H1 (cell line): ENCODE measurements at regions of chr15 and their contacts with region 1.

Region 1: DNA sequence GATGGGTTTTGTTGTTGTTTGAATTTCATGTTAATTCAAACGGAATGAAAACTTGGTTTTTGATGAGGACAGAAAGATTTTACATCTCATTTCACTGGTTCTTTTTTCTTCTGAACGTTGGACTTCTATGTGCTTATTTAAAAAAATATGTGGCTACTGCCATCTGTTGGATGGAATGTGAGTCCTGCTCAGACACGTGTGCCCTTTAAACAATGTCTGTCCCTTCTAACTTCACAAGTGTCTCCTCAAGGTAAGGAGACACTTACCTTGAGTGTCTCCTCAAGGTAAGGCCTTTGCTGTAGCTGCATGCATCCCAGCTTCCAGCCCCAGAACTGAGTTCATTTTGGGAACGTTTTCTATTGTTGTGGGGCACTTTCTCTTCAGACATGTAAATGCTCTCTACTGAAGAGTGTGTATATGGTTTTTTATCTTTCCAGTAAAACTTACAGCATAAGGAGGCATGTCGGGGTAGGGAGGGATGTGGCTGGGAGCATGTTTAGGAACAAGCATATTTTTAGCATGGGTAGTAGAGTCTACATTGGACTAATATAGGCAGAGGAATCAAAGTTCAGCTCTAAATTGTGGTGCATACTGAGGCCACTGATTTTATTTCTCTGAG is 63.1 kb upstream of the UBE3A start:
- DNase-seq: no peak
- H3K4me3 ChIP-seq: no peak overlapping the region
- H3K27ac ChIP-seq: no peak overlapping the region
- H3K4me1 ChIP-seq: peaks cover 0 to 11% (median 7%) of the 10 kb centered on the region in 4 experiments; a peak in 5 of 7 replicates
- H3K27me3 ChIP-seq: no peaks in the 10 kb centered on the region
- CTCF ChIP-seq: peak in 2 of 3 experiments; percentile 25 to 69; a peak in 2 of 4 replicates
- EP300 ChIP-seq: no peak
- POLR2A ChIP-seq: no peak
- RAD21 ChIP-seq: peak; percentile 60 to 63

Region 2: GRCh38 chr15:25481207-25481859 is 20.6 kb before region 1 on chr15:
- CTCF ChIA-PET with region 1: interaction called, 19 read pairs
- POLR2A ChIA-PET with region 1: no interaction called
- DNase-seq: peak; percentile 63 to 65
- H3K4me3 ChIP-seq: peak overlapping the region in 3 of 4 experiments; percentile 11 to 21 (median 14); a peak in 3 of 8 replicates
- H3K27ac ChIP-seq: peak overlapping the region; percentile 76
- H3K4me1 ChIP-seq: peaks cover 0 to 9% (median 5%) of the 10 kb centered on the region in 4 experiments; a peak in 4 of 7 replicates
- H3K27me3 ChIP-seq: no peaks in the 10 kb centered on the region
- CTCF ChIP-seq: no peak
- EP300 ChIP-seq: no peak
- POLR2A ChIP-seq: peak in 1 of 2 experiments; percentile 60; a peak in 1 of 3 replicates
- RAD21 ChIP-seq: no peak

Region 3: DNA sequence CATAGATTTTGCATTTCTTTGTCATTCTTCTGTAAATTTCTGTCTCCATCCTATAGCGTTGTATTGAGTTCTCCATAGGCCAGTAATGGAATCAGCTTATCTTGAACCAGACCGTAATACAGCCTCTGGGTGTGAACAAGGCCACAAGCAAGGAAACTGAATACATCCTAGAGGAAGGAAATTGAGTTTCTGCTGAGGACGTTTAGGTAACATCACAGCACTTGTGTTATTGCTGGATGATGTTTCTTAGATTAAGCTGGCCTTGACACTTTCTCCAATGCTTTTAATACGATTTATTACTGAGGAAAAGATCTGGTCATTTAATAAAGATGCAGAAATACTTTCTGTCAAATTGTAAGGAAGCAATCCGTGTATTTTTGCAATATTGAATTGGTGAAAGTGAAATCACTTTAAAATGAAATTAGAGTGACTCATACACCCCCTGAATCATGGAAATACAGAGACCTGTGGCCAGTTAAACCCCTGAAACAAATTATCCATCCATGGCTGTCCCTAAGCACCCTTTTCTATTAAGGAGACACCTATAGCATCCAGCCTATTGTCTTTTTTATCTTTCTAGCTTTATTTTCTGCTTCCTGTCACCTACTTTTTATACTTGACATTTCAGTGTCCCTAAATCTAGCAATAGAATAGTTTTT is 14.6 kb before region 1 on chr15:
- CTCF ChIA-PET with region 1: interaction called, 19 read pairs
- POLR2A ChIA-PET with region 1: interaction called, 3 read pairs
- DNase-seq: no peak
- H3K4me3 ChIP-seq: no peak overlapping the region
- H3K27ac ChIP-seq: no peak overlapping the region
- H3K4me1 ChIP-seq: no peaks in the 10 kb centered on the region; a peak in 2 of 7 replicates
- H3K27me3 ChIP-seq: no peaks in the 10 kb centered on the region
- CTCF ChIP-seq: no peak
- EP300 ChIP-seq: no peak
- POLR2A ChIP-seq: no peak
- RAD21 ChIP-seq: no peak

Region 4: GRCh38 chr15:25684521-25685431 is 182.8 kb after region 1 on chr15:
- CTCF ChIA-PET with region 1: interaction called, 119 read pairs
- POLR2A ChIA-PET with region 1: no interaction called
- DNase-seq: no peak
- H3K4me3 ChIP-seq: no peak overlapping the region
- H3K27ac ChIP-seq: no peak overlapping the region
- H3K4me1 ChIP-seq: peaks cover 0 to 7% (median 0%) of the 10 kb centered on the region in 4 experiments; a peak in 3 of 7 replicates
- H3K27me3 ChIP-seq: no peaks in the 10 kb centered on the region
- CTCF ChIP-seq: peak in 1 of 3 experiments; percentile 6; a peak in 1 of 4 replicates
- EP300 ChIP-seq: no peak
- POLR2A ChIP-seq: no peak
- RAD21 ChIP-seq: no peak

Region 5: GRCh38 chr15:25693321-25694237 is 191.6 kb after region 1 on chr15:
- CTCF ChIA-PET with region 1: interaction called, 119 read pairs
- POLR2A ChIA-PET with region 1: no interaction called
- DNase-seq: peak in 1 of 2 experiments; percentile 86
- H3K4me3 ChIP-seq: no peak overlapping the region
- H3K27ac ChIP-seq: no peak overlapping the region
- H3K4me1 ChIP-seq: peaks cover 0 to 14% (median 5%) of the 10 kb centered on the region in 4 experiments; a peak in 6 of 7 replicates
- H3K27me3 ChIP-seq: no peaks in the 10 kb centered on the region
- CTCF ChIP-seq: peak; percentile 70 to 92 (median 85)
- EP300 ChIP-seq: no peak
- POLR2A ChIP-seq: no peak
- RAD21 ChIP-seq: peak; percentile 66 to 68